ENCODE measurements at regions of chr5 and their contacts with region 1.

Region 1: DNA sequence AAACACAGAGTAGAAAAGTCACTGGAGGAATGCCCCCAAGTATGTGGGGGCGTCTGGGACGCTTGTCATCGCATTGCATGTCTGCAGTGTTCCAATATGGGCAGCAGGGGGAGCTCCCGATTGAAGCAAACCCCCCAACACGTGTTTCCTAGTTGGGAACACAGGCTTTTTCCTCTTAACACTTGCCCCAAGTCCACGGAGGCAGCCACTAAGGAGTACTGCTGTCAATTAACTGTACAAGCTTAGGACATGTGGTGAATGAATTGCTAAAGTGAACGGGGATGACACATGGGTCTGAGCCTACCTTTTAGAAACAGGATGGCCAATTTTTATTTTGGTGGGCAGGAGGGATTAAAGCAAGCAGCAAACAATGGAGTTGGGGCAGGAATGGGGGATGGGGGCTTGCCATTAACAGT is 2.2 kb downstream of the GABRB2 start:
- DNase-seq: peak; percentile 50
- CTCF ChIP-seq: peak; percentile 76

Region 2: GRCh38 chr5:161562446-161562845 is 18.1 kb after region 1 on chr5:
- CTCF ChIA-PET with region 1: interaction called, 11 read pairs
- POLR2A ChIA-PET with region 1: no interaction called
- DNase-seq: no peak
- CTCF ChIP-seq: no peak

Region 3: DNA sequence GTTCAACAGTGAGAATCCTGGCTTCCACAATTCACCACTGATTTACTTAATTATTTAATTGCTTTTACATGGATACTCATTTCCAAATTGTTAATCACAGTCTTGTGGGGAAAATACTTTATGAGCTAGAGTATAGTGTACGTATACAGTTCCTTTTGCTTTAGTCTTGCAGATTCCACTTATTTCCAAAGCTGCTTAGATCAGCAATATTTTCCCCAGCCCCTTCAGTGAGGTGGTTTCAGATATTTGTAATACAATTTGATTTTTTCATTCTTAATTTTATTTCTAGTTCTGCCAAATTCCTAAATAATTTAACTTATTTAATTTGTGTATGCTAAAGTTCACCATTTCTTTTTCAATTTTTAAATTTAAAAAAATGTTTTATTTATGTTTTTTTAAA is 100.9 kb after region 1 on chr5:
- CTCF ChIA-PET with region 1: no interaction called
- POLR2A ChIA-PET with region 1: no interaction called
- DNase-seq: no peak
- CTCF ChIP-seq: no peak

Region 4: GRCh38 chr5:163347671-163348070 is 1803.3 kb after region 1 on chr5:
- CTCF ChIA-PET with region 1: interaction called, 14 read pairs
- POLR2A ChIA-PET with region 1: no interaction called
- DNase-seq: peak; percentile 60
- CTCF ChIP-seq: peak; percentile 90